ENCODE measurements at regions of chr4 and their contacts with region 1.

Region 1: GRCh38 chr4:15805583-15806517 is 27.7 kb downstream of the CD38 start:
- DNase-seq: peak; percentile 32
- H3K4me3 Mint-ChIP-seq: no peak overlapping the region
- H3K27ac Mint-ChIP-seq: no peak overlapping the region
- H3K4me1 Mint-ChIP-seq: peaks cover 11% of the 10 kb centered on the region
- H3K27me3 Mint-ChIP-seq: no peaks in the 10 kb centered on the region
- CTCF ChIP-seq: peak; percentile 55

Region 2: GRCh38 chr4:15479089-15479912 is 326.5 kb before region 1 on chr4:
- CTCF ChIA-PET with region 1: interaction called, 8 read pairs
- intact Hi-C with region 1: loop called (anchors 1 kb)
- DNase-seq: peak; percentile 50
- H3K4me3 Mint-ChIP-seq: peak overlapping the region; percentile 94
- H3K27ac Mint-ChIP-seq: peak overlapping the region; percentile 98
- H3K4me1 Mint-ChIP-seq: no peaks in the 10 kb centered on the region
- H3K27me3 Mint-ChIP-seq: no peaks in the 10 kb centered on the region
- CTCF ChIP-seq: peak; percentile 47

Region 3: DNA sequence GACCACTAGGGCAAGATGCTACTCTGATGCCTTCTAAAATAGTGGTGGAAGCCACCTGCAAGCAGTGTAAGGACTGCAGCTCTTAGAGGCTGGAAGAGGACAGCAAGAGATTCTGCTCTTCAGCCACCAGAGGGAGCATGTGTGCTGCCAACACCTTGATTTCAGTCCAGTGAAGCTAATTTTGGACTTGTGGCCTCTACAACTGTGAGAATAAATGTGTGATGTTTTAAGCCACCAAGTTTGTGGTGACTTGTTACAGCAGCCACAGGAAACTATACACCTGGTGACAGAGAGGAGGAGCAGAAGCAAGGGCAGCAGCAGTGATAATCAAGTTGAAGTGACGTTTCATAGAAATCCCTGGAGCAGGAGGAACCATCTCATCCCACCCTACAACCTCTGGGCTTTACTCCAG is 76.8 kb after region 1 on chr4:
- CTCF ChIA-PET with region 1: interaction called, 18 read pairs
- intact Hi-C with region 1: loop called (anchors 1 kb)
- DNase-seq: peak; percentile 54
- H3K4me3 Mint-ChIP-seq: no peak overlapping the region
- H3K27ac Mint-ChIP-seq: peak overlapping the region; percentile 77
- H3K4me1 Mint-ChIP-seq: peaks cover 27% of the 10 kb centered on the region
- H3K27me3 Mint-ChIP-seq: no peaks in the 10 kb centered on the region
- CTCF ChIP-seq: peak; percentile 71

Region 4: GRCh38 chr4:15956179-15956850 is 150.5 kb after region 1 on chr4:
- CTCF ChIA-PET with region 1: interaction called, 71 read pairs
- intact Hi-C with region 1: loop called (anchors 1 kb)
- DNase-seq: peak; percentile 85
- H3K4me3 Mint-ChIP-seq: no peak overlapping the region
- H3K27ac Mint-ChIP-seq: no peak overlapping the region
- H3K4me1 Mint-ChIP-seq: peaks cover 18% of the 10 kb centered on the region
- H3K27me3 Mint-ChIP-seq: no peaks in the 10 kb centered on the region
- CTCF ChIP-seq: peak; percentile 56

Region 5: GRCh38 chr4:16001484-16001858 is 195.6 kb after region 1 on chr4:
- CTCF ChIA-PET with region 1: interaction called, 6 read pairs
- intact Hi-C with region 1: loop called (anchors 1 kb)
- DNase-seq: peak; percentile 33
- H3K4me3 Mint-ChIP-seq: no peak overlapping the region
- H3K27ac Mint-ChIP-seq: no peak overlapping the region
- H3K4me1 Mint-ChIP-seq: no peaks in the 10 kb centered on the region
- H3K27me3 Mint-ChIP-seq: no peaks in the 10 kb centered on the region
- CTCF ChIP-seq: peak; percentile 39

Region 6: DNA sequence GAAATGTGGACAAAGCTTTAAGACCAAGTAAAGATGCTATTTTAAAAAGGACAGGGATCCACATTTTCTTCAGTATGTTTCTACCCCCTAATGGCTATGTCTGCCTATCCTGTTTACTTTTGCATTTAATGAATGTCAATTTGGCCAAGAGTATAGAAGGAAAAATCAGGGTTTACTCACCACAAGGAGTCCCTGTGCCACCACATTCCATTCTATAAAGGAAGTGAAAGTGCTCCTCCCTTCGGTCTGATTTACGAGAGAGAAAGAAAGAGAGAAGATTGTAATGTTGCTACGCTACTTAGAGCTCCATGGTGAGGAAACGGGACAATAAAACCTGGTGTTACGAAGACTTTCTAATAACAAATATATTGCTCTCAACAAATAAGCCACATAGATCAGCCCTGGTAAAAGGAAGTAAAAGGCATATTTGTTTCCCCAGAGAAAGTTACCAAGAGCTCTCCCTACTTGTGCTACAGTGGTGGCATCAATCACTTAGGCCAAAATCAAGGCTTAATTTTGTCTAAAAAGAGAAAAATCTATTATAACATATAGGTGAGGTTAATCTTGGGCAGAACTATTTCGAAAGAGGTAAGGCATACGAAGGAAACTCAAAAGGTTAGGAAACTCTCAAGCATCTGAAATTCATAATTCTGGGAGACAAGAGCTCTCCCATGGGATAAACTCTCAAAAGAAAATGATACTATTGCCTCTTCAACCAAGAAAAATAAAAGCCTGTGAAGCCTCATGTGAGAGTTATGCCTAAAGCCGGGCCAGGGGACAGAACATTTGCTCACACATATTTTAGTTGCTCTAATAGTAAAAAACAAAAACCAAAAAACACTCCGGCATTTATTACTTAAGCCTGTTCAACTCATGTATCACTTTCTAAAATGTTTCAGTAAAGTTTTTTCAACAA is 390.9 kb after region 1 on chr4:
- CTCF ChIA-PET with region 1: interaction called, 3 read pairs
- intact Hi-C with region 1: loop called (anchors 5 kb)
- DNase-seq: peak; percentile 29
- H3K4me3 Mint-ChIP-seq: peak overlapping the region; percentile 61
- H3K27ac Mint-ChIP-seq: peak overlapping the region; percentile 88
- H3K4me1 Mint-ChIP-seq: peaks cover 8% of the 10 kb centered on the region
- H3K27me3 Mint-ChIP-seq: no peaks in the 10 kb centered on the region
- CTCF ChIP-seq: no peak

Region 7: GRCh38 chr4:16264798-16265197 is 458.9 kb after region 1 on chr4:
- CTCF ChIA-PET with region 1: interaction called, 5 read pairs
- intact Hi-C with region 1: loop called (anchors 10 kb)
- DNase-seq: no peak
- H3K4me3 Mint-ChIP-seq: no peak overlapping the region
- H3K27ac Mint-ChIP-seq: no peak overlapping the region
- H3K4me1 Mint-ChIP-seq: no peaks in the 10 kb centered on the region
- H3K27me3 Mint-ChIP-seq: no peaks in the 10 kb centered on the region
- CTCF ChIP-seq: no peak

Measured in Calu3 (cell line).